ENCODE measurements at regions of chr21 and their contacts with region 1.

Region 1: GRCh38 chr21:46617267-46618051 is 12.6 kb upstream of the S100B start:
- DNase-seq: no peak
- H3K4me3 ChIP-seq: no peak overlapping the region
- H3K27ac ChIP-seq: no peak overlapping the region
- H3K4me1 ChIP-seq: no peaks in the 10 kb centered on the region
- H3K27me3 ChIP-seq: 0 out of 2 replicates have a peak, but pooled peaks cover 2% of the 10 kb centered on the region
- CTCF ChIP-seq: no peak

Region 2: DNA sequence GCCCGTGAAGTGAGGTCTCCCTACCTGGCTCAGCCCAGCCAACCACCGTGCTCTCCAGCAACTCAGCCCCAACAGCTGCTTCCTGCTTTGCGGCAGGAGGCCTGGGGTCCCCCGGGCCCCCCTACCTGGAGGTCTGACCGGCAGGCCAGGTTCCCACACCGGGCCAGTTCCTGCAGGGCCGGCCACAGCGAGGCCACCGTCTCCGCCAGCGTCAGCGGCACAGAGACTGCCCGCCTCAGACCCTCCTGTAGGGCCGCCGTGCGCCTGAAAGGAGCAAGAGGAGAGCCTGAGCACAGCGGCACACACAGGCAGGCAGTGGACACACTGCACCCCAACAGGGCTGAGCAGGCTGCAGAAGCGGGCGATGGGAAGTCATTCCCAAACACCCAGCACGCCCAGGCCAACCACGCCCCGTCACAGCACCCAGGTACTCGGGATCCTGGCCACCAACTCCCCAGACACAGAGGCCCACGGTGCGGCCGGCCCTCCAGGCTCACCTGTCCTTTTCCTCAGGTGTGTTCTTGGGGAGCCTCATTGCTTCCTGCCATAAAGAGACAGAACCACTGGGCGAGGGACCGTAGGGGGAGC is 479.0 kb before region 1 on chr21:
- CTCF ChIA-PET with region 1: no interaction called
- POLR2A ChIA-PET with region 1: interaction called, 11 read pairs
- intact Hi-C with region 1: no loop called
- DNase-seq: no peak
- H3K4me3 ChIP-seq: no peak overlapping the region
- H3K27ac ChIP-seq: no peak overlapping the region
- H3K4me1 ChIP-seq: no peaks in the 10 kb centered on the region
- H3K27me3 ChIP-seq: no peaks in the 10 kb centered on the region
- CTCF ChIP-seq: no peak

Region 3: DNA sequence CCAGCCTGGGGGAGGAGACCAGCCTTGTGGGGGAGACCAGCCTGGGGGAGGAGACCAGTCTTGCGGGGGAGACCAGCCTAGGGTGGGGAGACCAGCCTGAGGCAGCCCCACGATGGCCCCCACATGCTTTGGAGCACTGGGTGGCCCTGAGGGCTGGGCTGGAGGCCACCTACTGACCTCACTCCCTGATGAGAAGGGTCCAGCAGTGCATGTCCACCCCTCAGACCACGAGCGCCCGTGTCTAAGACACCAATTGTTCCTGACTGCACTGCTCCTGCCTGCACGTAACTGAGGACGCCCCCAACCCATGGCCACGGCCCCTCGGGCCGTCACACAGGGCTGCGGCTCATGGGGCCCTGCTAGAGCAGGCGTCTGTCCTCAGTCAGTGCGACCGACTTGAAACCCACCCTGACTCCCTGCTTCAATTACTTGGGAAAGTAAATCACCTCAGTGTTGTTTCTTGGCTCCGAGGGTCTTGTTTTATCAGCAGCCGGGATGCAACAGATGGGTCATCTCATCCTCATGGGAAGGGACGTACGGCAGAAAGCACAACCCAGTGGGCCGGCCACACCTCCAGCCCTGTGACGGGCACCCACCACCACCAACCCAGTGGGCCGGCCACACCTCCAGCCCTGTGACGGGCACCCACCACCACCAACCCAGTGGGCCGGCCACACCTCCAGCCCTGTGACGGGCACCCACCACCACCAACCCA is 433.4 kb before region 1 on chr21 and contains the start of gene SPATC1L:
- CTCF ChIA-PET with region 1: no interaction called
- POLR2A ChIA-PET with region 1: interaction called, 44 read pairs
- intact Hi-C with region 1: no loop called
- DNase-seq: peak in 1 of 2 experiments; percentile 40
- H3K4me3 ChIP-seq: peak within 1 kb of the TSS; percentile 73
- H3K27ac ChIP-seq: no peak within 1 kb of the TSS
- H3K4me1 ChIP-seq: peaks cover 12% of the 10 kb centered on the region
- H3K27me3 ChIP-seq: no peaks in the 10 kb centered on the region
- CTCF ChIP-seq: no peak
- total RNA-seq, gene SPATC1L: 31.8 and 32.7 TPM in 2 replicates

Region 4: DNA sequence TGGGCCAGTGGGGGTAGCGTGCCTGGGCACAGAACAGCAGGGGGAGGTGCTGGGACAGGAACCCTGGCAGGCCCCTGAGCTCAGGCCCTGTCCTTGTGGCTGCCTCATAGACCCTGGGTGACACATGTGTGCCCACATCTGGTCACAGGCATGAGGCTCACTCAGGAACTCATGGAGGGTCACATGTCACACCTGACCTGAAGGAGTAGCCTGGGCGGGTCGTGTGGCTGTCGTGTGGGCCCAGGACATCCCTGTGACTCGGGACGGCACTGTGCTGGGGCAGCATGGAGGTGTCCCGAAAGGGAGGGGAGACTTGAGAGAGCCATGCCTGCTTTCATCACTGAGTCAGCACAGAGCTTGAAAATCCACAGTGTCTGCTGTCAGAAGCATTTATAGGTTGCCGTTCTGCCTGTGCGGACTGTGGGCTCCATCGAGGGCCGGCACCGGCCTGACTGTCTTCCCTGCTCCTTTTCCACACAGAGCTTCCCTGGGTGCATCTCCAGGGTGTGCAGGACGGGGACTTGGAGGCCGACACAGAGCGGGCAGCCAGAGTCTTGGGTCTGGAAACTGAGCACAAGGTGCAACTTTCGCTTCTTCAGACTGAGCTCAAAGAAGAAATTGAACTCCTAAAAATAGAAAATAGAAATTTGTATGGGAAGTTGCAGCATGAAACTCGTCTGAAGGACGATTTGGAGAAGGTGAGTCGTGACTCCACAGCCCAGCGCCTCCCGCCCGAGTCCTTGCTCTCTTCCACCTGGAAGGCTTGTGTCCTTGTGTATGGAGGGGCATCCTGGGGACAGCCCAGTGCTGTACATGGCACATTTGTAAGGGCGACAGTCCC is 260.7 kb before region 1 on chr21:
- CTCF ChIA-PET with region 1: no interaction called
- POLR2A ChIA-PET with region 1: no interaction called
- intact Hi-C with region 1: no loop called
- DNase-seq: no peak
- H3K4me3 ChIP-seq: no peak overlapping the region
- H3K27ac ChIP-seq: no peak overlapping the region
- H3K4me1 ChIP-seq: no peaks in the 10 kb centered on the region; the same call in 1 of the 2 replicates
- H3K27me3 ChIP-seq: no peaks in the 10 kb centered on the region
- CTCF ChIP-seq: no peak

Measured in PC-9 (cell line).